ENCODE measurements at regions of chr12 and their contacts with region 1.

Region 1: DNA sequence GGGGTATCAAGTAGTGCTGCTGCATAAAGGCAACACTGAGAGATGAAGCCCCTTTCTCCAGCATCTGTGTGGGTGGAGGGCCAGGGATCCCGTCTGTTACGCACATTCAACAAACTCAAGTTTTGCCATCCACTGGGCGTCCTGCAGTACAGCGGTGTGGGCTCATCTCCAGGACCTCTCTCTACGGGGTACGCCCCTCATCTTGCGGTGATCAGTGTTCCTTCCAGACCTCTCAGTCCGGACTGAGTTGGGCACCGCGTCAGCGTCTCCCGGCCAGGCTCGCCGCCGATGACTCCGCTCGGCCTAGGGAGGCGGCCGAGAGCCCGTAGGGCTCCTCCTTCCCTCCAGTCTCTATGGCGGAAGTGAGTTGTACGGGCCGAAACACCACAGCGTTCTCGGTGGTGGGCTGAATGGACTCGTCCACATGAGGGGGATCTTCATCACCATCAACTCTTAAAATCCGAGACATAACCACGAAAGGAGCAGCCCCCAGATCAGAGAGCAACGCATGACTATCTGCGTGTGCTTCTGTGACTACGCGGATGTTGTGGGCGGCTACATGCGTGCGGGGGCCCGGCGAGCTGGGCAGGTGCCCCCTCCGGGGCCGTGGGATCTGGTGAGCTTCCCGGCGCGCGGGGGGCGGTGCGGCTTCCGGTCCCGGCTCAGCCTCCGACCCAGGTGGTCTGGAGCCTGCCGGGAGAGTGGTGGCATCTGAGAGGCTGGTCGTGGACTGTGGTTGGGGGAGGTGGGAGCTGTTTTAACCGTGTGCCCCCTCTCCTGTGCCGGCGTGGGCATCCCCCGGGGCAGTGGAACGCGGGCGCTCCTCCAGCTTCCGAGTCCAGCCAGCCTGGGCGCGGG is at the start of gene ATG101:
- H3K4me3 Mint-ChIP-seq: peak within 1 kb of the TSS; percentile 88
- H3K27ac Mint-ChIP-seq: peak within 1 kb of the TSS; percentile 97
- H3K4me1 Mint-ChIP-seq: peaks cover 56% of the 10 kb centered on the region
- H3K27me3 Mint-ChIP-seq: peaks cover 17% of the 10 kb centered on the region

Region 2: GRCh38 chr12:51721282-51721940 is 348.1 kb before region 1 on chr12:
- intact Hi-C with region 1: no loop called
- H3K4me3 Mint-ChIP-seq: peak overlapping the region; percentile 22
- H3K27ac Mint-ChIP-seq: no peak overlapping the region
- H3K4me1 Mint-ChIP-seq: peaks cover 15% of the 10 kb centered on the region
- H3K27me3 Mint-ChIP-seq: peaks cover 26% of the 10 kb centered on the region

Region 3: DNA sequence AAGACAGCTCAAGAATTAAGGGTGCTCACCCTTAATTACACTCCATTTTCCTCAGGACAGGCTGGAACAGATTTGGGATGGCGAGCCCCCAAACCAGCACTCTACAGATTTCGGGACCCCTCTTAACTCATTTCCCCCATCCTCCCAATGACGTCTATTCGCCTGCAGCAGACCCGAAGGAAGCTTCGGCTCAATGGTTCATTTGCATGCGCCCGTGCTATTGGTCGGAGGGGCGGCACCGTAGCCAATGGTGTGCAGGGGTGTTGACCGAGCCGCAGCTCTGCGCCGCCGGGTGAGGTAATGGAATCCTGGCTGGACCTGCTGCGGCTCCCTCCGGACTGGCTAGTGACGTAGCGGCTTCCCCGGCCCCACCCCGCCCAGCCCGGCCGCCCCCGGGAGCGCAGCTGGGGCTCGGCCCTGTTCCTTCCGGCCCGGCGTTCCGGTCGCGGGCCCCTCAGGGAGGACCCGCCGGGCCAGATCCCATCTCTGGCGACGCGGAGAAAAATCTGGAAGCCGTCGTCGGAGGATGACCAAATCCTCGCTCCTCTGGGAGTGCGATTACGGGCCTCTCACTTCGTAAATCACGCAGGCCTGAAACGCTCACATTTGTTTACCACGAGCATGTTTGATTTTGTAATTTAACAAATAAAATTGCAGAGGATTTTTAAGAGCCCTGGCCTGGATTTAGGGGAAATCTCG is 36.6 kb before region 1 on chr12:
- intact Hi-C with region 1: loop called (anchors 2 kb)
- H3K4me3 Mint-ChIP-seq: peak overlapping the region; percentile 60
- H3K27ac Mint-ChIP-seq: peak overlapping the region; percentile 81
- H3K4me1 Mint-ChIP-seq: peaks cover 37% of the 10 kb centered on the region
- H3K27me3 Mint-ChIP-seq: peaks cover 35% of the 10 kb centered on the region

Region 4: GRCh38 chr12:52050761-52051541 is 18.6 kb before region 1 on chr12 and contains the start of gene NR4A1:
- intact Hi-C with region 1: loop called (anchors 1 kb)
- H3K4me3 Mint-ChIP-seq: peak within 1 kb of the TSS; percentile 81
- H3K27ac Mint-ChIP-seq: peak within 1 kb of the TSS; percentile 89
- H3K4me1 Mint-ChIP-seq: peaks cover 50% of the 10 kb centered on the region
- H3K27me3 Mint-ChIP-seq: peaks cover 36% of the 10 kb centered on the region

Region 5: DNA sequence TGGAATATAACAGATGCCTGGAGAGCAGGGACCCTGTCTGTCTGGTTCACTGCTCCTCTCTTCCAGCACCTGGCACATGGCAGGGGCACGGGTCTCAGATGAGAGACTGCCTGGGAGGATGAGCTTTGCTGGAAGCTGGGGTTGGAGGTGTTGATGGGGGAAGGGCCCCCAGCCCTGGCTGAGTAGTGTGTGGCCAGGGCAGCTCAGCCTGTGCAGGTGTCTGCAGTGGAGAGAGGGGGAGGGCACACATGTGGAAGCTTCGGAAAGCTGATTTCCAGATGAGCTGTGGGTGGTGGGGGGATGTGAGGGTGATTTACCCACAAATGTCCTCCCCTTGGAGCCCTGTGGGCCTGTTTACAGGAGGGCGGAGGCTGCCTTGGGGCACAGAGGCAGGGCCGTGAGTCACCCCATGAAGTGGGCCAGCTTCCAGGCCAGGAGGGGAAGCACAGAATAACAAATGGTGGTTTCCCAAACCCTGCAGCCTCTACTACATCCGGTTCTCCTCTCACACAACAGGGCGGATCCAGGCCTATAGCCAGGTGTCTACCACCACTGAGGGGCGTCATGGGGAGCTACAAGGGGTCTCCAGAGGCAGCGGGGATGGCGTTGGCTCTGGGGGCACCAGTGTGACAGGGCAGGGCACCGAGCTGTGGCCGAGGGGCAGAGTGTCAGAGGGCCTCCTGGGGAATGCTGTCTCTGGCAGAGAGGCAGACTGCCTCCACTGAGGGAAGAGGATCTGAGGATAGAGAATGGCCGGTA is 174.5 kb after region 1 on chr12:
- intact Hi-C with region 1: no loop called
- H3K4me3 Mint-ChIP-seq: no peak overlapping the region
- H3K27ac Mint-ChIP-seq: peak overlapping the region; percentile 85
- H3K4me1 Mint-ChIP-seq: peaks cover 36% of the 10 kb centered on the region
- H3K27me3 Mint-ChIP-seq: peaks cover 29% of the 10 kb centered on the region

Measured in dendritic cell treated with granulocyte-macrophage colony-stimulating factor and Interleukin-4, amounts not matched to agents 40 ng/mL and 50 ng/mL, for 4 days (primary cell).